Activated CD4-positive, alpha-beta memory T cell treated with anti-CD3 and anti-CD28 coated beads for 36 hours (primary cell): ENCODE measurements at regions of chr17 and their contacts with region 1.

Region 1: DNA sequence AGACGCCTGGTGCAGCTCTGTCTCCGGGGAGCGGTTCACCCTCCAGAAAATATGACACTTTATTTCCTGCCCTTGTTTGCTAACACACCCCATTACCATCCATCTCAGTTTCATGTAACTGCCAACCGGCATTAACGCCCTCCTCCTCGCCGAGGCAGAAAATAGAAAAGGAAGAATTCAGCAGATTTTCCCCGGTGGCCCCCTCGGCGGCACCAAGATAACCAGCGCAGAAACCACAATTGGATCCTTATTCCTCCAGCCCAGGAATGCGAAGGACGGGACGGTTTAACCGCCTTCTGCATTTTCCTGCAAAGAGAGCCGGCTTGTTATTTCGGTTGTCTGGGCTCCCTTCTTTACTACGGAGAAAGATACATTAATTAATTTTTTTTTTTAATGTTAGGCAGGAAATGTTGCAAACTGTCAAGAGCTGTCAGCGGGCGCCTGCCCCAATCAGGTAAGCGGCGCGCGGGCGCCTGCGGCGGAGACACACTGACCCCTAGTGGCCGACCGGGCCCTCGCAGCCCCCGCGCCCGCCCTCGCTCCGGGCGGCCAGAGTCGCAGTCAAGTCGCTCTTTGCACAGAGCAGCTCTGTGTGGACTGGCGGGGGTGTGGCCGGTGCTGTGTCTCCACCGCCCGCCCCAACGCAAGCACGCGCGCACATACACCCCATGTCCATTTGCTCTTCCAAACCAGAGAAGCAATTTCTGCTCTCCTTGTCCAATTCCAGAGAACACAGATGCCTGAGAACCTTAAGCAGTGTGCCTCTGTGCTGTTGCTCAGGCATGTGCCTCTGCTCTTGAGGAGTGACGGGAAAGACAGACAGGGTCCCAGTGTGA is 53.6 kb downstream of the C17orf67 start:
- DNase-seq: peak; percentile 91
- H3K4me3 Mint-ChIP-seq: peak overlapping the region; percentile 79
- H3K27ac Mint-ChIP-seq: peak overlapping the region; percentile 74
- H3K4me1 Mint-ChIP-seq: peaks cover 23% of the 10 kb centered on the region
- H3K27me3 Mint-ChIP-seq: peaks cover 2% of the 10 kb centered on the region

Region 2: DNA sequence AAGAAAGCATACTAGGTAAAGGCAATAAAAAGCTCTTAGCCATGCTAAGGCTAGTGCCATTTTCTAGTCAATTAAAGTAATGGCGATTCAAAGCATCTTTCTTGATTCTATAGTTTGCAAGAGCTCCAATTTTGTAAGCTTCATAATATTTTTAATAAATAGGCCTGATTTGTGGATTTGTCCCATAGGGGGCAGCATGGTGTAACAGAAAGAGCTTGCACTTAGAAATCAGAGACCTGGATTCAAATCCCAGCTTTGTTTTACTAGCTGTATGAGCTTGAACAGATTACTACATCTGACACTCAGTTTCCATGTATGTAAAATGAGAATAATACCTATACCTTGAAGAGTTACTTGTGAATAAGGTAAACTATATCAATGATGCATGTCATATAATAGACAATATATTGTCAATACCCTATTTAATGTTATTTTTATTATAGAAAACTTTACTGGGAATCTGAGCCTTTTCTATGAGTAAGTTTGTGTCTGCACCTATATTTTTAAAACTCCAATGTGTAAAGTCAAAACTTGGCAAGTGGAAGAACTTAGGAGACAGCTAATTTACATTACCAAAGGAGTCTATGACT is 280.2 kb before region 1 on chr17:
- CTCF ChIA-PET with region 1: interaction called, 10 read pairs
- POLR2A ChIA-PET with region 1: no interaction called
- intact Hi-C with region 1: no loop called
- DNase-seq: peak; percentile 11
- H3K4me3 Mint-ChIP-seq: no peak overlapping the region
- H3K27ac Mint-ChIP-seq: no peak overlapping the region
- H3K4me1 Mint-ChIP-seq: no peaks in the 10 kb centered on the region
- H3K27me3 Mint-ChIP-seq: no peaks in the 10 kb centered on the region

Region 3: DNA sequence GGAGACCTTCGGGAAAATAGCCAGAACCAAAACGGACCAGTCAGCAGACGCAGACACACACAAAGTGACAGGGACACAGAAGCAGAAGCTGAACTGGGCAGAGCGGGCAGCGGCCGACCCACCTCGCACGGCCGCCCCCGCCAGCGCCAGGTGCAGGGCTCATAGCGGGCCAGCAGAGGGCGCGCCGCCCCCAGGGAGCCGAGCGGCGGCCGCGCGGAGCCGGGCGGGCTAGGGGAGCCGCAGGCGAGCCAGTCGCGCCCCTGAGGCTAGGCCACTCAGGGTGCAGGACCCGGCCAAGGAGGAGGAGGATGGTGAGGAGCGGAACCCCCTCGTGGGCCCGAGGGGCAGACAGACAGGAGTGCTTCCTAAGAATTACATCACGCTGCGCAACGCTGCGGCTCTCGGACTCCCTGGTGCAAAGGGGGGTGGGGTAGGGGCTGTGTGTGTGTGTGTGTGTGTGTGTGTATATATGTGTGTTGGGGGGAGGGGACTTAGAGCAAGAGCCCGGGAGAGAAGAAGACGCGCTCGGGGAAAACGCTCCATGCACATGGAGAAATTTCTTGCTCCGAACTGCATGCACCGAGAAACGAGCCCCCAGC is 187.5 kb before region 1 on chr17:
- CTCF ChIA-PET with region 1: interaction called, 47 read pairs
- POLR2A ChIA-PET with region 1: no interaction called
- intact Hi-C with region 1: loop called (anchors 1 kb)
- DNase-seq: peak; percentile 70
- H3K4me3 Mint-ChIP-seq: peak overlapping the region; percentile 60
- H3K27ac Mint-ChIP-seq: no peak overlapping the region
- H3K4me1 Mint-ChIP-seq: peaks cover 23% of the 10 kb centered on the region
- H3K27me3 Mint-ChIP-seq: peaks cover 44% of the 10 kb centered on the region

Region 4: DNA sequence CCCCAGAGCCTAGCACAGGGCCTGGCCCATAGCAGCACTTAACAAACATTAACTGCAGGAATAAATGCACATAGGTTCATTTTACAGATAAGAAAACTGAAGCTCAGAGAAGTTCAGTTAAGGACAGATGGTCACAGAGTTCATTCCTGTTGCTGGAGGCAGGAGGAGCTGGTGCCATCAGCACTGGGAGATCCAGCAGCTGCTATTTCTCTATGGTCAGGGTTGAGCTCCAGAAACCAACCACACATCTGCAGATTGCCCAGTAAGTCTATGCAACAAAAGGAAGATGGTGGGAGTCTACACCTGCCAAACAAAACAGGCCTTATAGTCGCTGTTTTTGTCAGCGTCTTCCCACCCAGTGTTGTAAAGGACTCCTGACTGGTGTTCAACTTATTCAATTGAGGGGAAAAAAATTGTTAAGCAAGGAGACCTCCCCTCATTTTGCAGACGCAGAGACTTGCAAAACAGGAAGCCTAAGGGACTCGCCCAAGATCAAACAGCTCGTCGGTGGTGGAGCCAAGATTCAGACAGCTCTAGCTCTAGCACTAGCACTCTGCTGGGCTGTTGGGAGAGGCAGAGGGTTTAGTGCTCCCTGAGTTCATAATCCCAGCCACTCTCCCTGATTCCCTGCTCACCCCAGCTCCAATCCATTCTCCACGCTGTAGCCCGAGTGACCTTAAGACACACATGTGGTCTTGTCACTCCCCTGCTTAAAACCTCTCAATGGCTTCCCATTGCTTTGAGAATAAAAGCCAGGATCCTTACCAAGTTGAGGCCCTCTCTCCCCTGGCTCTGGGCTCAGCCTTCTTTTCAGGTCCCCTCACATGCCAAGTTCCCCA is 177.6 kb before region 1 on chr17:
- CTCF ChIA-PET with region 1: interaction called, 10 read pairs
- POLR2A ChIA-PET with region 1: no interaction called
- intact Hi-C with region 1: no loop called
- DNase-seq: no peak
- H3K4me3 Mint-ChIP-seq: no peak overlapping the region
- H3K27ac Mint-ChIP-seq: no peak overlapping the region
- H3K4me1 Mint-ChIP-seq: peaks cover 34% of the 10 kb centered on the region
- H3K27me3 Mint-ChIP-seq: peaks cover 25% of the 10 kb centered on the region

Region 5: GRCh38 chr17:56653877-56654276 is 126.2 kb before region 1 on chr17:
- CTCF ChIA-PET with region 1: interaction called, 4 read pairs
- POLR2A ChIA-PET with region 1: no interaction called
- intact Hi-C with region 1: loop called (anchors 1 kb)
- DNase-seq: peak; percentile 71
- H3K4me3 Mint-ChIP-seq: no peak overlapping the region
- H3K27ac Mint-ChIP-seq: no peak overlapping the region
- H3K4me1 Mint-ChIP-seq: peaks cover 3% of the 10 kb centered on the region
- H3K27me3 Mint-ChIP-seq: peaks cover 4% of the 10 kb centered on the region

Region 6: GRCh38 chr17:56679115-56679766 is 100.9 kb before region 1 on chr17:
- CTCF ChIA-PET with region 1: interaction called, 3 read pairs
- POLR2A ChIA-PET with region 1: no interaction called
- intact Hi-C with region 1: loop called (anchors 1 kb)
- DNase-seq: no peak
- H3K4me3 Mint-ChIP-seq: peak overlapping the region; percentile 52
- H3K27ac Mint-ChIP-seq: no peak overlapping the region
- H3K4me1 Mint-ChIP-seq: peaks cover 19% of the 10 kb centered on the region
- H3K27me3 Mint-ChIP-seq: peaks cover 33% of the 10 kb centered on the region

Region 7: DNA sequence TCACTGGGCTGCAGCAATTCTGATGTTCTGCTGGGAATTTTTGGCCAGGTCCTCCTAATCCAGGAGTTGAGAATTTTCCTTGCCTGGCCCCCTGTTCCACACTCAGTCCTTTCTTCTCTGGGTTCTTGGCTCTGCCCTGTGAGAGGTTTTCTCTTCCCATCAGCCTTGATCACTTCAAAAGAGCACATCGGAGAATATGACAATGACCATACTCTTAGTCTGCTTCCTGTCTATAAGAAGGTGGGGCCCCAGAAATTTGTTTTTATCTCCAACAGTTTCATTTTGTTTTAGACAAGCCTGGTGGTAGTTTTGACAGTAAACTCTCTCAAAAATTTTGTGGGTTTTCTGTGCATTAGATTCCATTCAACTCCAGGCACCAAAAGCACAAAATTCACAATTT is 17.1 kb before region 1 on chr17:
- CTCF ChIA-PET with region 1: interaction called, 7 read pairs
- POLR2A ChIA-PET with region 1: no interaction called
- intact Hi-C with region 1: loop called (anchors 2 kb)
- DNase-seq: no peak
- H3K4me3 Mint-ChIP-seq: no peak overlapping the region
- H3K27ac Mint-ChIP-seq: peak overlapping the region; percentile 38
- H3K4me1 Mint-ChIP-seq: peaks cover 8% of the 10 kb centered on the region
- H3K27me3 Mint-ChIP-seq: peaks cover 2% of the 10 kb centered on the region